Activated CD4-positive, alpha-beta T cell treated with anti-CD3 and anti-CD28 coated beads, Interleukin-2, amount 10 ng/mL, durations not matched to agents 24 days and 14 days (primary cell): ENCODE measurements at regions of chr12 and their contacts with region 1.

Region 1: GRCh38 chr12:92987362-92987761 is 58.3 kb upstream of the EEA1 start:
- DNase-seq: peak; percentile 77
- H3K4me3 Mint-ChIP-seq: peak overlapping the region; percentile 18
- H3K27ac Mint-ChIP-seq: peak overlapping the region; percentile 66
- H3K4me1 Mint-ChIP-seq: peaks cover 22% of the 10 kb centered on the region
- H3K27me3 Mint-ChIP-seq: peaks cover 3% of the 10 kb centered on the region

Region 2: DNA sequence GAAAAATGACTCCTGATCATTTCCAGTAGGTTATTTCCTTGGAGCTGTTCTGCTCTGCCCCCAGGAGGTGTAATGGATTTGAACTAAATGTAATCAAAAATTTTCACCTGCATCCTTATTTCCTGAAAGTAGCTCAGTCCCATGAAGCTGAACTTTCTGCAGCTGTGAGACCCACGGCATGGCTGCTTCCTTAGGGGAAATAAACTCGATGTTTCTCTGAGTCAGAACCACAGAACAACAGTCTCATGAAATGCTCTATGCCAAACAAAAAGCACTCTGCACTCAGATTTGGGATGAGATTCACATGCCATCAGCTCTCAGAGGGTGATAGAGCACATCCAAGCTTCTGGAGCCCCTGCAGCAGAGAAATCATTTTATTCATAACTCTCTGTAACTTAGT is 508.7 kb before region 1 on chr12:
- intact Hi-C with region 1: no loop called
- DNase-seq: no peak
- H3K4me3 Mint-ChIP-seq: no peak overlapping the region
- H3K27ac Mint-ChIP-seq: no peak overlapping the region
- H3K4me1 Mint-ChIP-seq: peaks cover 6% of the 10 kb centered on the region
- H3K27me3 Mint-ChIP-seq: no peaks in the 10 kb centered on the region

Region 3: GRCh38 chr12:92827836-92828431 is 159.4 kb before region 1 on chr12:
- intact Hi-C with region 1: loop called (anchors 10 kb)
- DNase-seq: peak; percentile 80
- H3K4me3 Mint-ChIP-seq: no peak overlapping the region
- H3K27ac Mint-ChIP-seq: no peak overlapping the region
- H3K4me1 Mint-ChIP-seq: no peaks in the 10 kb centered on the region
- H3K27me3 Mint-ChIP-seq: no peaks in the 10 kb centered on the region

Region 4: DNA sequence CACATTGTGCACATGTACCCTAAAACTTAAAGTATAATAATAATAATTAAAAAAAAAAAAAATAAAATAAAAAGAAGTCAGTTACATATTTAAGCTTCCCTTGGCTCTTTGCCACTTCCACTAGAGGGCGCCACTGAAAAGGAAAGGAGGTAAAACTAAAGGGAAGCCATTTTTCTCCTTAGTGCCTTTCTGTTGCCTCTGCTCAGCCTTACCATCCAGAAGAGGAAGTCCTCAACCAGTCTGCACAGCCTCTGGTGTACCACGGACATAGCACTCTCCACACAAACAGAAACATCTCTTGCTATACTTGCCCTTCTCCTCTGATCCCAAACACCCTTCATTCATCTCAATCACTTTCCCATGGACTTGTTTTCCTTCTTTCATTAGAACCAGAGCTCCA is 110.7 kb after region 1 on chr12:
- intact Hi-C with region 1: loop called (anchors 5 kb)
- DNase-seq: peak; percentile 90
- H3K4me3 Mint-ChIP-seq: no peak overlapping the region
- H3K27ac Mint-ChIP-seq: no peak overlapping the region
- H3K4me1 Mint-ChIP-seq: peaks cover 9% of the 10 kb centered on the region
- H3K27me3 Mint-ChIP-seq: no peaks in the 10 kb centered on the region

Region 5: GRCh38 chr12:93378373-93379325 is 391.3 kb after region 1 on chr12:
- intact Hi-C with region 1: loop called (anchors 1 kb)
- DNase-seq: peak; percentile 90
- H3K4me3 Mint-ChIP-seq: peak overlapping the region; percentile 100
- H3K27ac Mint-ChIP-seq: peak overlapping the region; percentile 100
- H3K4me1 Mint-ChIP-seq: peaks cover 37% of the 10 kb centered on the region
- H3K27me3 Mint-ChIP-seq: no peaks in the 10 kb centered on the region

Region 6: DNA sequence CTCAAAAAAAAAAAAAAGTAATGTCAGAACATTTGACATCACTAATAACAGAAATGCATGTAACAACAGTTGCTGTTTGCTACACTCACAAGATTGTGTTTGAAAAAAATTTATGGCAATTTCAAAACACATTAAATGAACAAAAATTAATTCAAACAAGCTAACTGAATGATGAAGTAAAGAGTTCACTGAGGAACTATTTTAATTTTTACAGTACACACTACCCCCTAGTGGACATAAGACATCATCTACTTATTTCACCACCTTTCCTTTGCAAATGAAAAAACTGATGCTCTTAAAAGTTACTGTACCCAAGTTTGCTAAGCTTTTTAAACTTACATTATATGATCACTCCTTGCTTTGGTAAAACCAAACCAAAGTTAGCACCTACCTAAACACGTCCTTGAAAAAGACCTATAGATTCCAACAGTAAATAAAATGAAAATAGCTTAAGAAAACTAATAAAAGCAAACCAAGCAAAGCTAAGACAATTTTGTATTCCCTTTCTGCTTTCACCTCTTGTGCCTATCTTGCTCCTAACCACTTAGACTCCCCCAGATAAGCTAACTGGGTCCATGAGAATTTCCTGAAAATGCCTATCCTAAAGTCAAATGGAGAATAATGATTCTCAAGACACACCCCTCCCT is 432.1 kb after region 1 on chr12:
- intact Hi-C with region 1: loop called (anchors 1 kb)
- DNase-seq: peak; percentile 52
- H3K4me3 Mint-ChIP-seq: no peak overlapping the region
- H3K27ac Mint-ChIP-seq: peak overlapping the region; percentile 41
- H3K4me1 Mint-ChIP-seq: peaks cover 62% of the 10 kb centered on the region
- H3K27me3 Mint-ChIP-seq: no peaks in the 10 kb centered on the region

Region 7: DNA sequence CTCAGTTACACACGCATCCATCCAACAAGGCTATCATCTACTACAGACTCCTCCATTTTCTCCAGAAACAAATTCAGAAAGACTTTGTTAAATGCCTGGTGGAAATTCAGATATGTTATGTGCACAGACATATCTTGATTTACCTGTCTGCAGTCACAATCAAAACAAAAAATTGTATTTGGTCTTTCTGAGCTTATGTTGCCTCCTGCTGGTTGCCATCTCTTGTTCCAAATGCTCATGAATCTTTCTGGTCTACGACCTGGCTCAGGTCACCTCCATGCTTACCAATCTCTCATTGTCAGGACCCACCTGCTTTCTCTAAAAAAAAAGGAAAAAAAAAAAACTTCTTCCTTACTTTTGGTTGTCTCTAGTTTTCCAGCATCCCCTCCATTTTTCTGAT is 991.8 kb after region 1 on chr12:
- intact Hi-C with region 1: loop called (anchors 10 kb)
- DNase-seq: peak; percentile 80
- H3K4me3 Mint-ChIP-seq: no peak overlapping the region
- H3K27ac Mint-ChIP-seq: no peak overlapping the region
- H3K4me1 Mint-ChIP-seq: peaks cover 34% of the 10 kb centered on the region
- H3K27me3 Mint-ChIP-seq: peaks cover 6% of the 10 kb centered on the region